Activated T-helper 1 cell treated with anti-CD3 and anti-CD28 coated beads, Interleukin-12 subunit alpha, Interleukin-12 subunit beta, Interleukin-2, Interleukin-4 antibody, amounts not matched to agents 30 ng/mL and 10 ng/mL and 1 ng/mL, durations not matched to agents 14 hours and 24 hours and 36 hours (primary cell): ENCODE measurements at regions of chr11 and their contacts with region 1.

Region 1: DNA sequence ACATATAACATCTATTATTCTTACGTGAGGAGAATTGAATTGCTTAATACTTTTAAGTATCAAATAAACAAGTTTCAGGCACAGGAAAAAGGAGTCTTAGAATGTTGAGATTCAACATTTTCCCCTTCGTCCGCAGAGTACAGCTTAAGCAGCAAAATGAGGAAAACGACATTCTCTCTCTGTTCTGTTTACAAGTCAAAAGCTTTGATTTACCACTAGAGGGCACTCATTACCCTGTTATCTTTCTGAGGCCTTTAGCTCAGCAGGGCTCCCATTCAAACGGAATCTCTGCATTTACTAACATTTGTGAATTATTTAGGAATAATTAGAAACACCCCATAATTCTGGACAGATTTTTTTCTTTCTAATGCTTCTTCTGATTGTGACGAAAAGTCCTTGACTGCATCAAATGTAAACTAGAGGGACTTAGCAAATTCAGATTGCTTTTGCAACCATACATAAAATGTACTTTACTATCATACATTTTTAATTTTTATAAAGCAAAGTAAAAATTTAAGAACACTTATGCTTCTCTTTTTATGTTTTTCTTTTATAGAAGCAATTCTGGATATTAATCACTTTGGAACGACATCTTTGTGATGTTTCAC is 75.0 kb downstream of the JRKL start:
- DNase-seq: no peak
- H3K4me3 Mint-ChIP-seq: no peak overlapping the region
- H3K27ac Mint-ChIP-seq: no peak overlapping the region
- H3K4me1 Mint-ChIP-seq: no peaks in the 10 kb centered on the region
- H3K27me3 Mint-ChIP-seq: peaks cover 8% of the 10 kb centered on the region

Region 2: GRCh38 chr11:97140885-97141494 is 676.2 kb after region 1 on chr11:
- intact Hi-C with region 1: loop called (anchors 5 kb)
- DNase-seq: no peak
- H3K4me3 Mint-ChIP-seq: no peak overlapping the region
- H3K27ac Mint-ChIP-seq: no peak overlapping the region
- H3K4me1 Mint-ChIP-seq: no peaks in the 10 kb centered on the region
- H3K27me3 Mint-ChIP-seq: no peaks in the 10 kb centered on the region